ENCODE measurements at regions of chr15 and their contacts with region 1.

Region 1: DNA sequence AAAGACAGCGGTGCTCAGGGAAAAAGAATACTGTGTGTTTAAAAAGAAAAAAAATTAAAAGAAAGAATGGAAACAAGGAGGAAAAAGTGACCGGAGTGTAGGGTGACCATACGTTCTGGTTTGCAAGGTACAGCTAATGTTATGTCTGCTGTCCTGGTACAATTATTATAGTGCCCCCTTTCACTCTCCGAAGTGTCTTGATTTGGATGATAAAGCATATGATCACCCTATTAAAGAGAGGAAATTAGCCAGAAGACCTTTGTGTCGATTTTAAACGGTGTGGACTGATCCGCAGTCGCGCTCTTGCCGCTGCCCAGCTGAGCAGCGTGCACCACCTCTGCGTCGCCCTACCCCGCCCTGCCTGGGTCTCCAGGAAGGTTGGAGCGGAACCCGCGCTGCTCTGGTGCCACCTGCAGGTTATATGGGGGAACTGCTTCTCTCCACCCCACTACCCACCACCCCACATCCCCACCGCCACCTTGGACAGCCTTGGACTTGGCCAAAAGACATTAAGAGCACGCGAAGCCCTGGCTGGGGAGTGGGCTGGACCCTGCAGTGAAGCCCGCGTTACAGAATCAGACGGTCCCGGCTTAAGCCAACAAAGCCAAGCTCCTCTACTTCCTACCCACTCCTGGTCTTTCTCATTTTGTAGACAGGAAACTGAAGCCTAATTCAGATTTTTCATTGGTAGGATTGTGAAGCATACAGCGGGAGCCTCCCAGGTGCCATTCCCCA is 41.2 kb upstream of the UBE2Q2 start:
- DNase-seq: peak; percentile 86
- H3K4me3 Mint-ChIP-seq: peak overlapping the region; percentile 43
- H3K27ac Mint-ChIP-seq: no peak overlapping the region
- H3K4me1 Mint-ChIP-seq: peaks cover 2% of the 10 kb centered on the region
- H3K27me3 Mint-ChIP-seq: peaks cover 19% of the 10 kb centered on the region

Region 2: DNA sequence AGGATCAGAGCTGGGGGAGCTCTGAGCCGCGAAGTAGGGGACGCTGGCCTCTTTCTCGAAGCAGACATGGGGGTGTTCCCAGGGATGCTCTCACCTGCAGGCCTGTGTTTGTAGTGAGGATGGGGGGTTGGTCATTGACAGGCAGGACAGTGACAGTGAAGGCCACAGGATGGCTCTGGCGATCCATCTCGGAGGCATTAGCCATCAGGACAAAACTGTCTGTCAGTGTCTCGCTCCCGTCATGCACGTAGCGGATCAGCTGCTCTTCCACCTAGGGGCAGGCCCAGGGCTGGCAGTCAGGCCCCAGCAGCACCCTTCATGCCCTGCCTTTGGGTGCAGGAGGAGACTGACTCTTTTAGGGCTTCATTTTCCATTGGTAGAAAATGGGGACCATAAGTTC is 117.4 kb before region 1 on chr15:
- CTCF ChIA-PET with region 1: interaction called, 8 read pairs
- intact Hi-C with region 1: loop called (anchors 1 kb)
- DNase-seq: no peak
- H3K4me3 Mint-ChIP-seq: no peak overlapping the region
- H3K27ac Mint-ChIP-seq: no peak overlapping the region
- H3K4me1 Mint-ChIP-seq: no peaks in the 10 kb centered on the region
- H3K27me3 Mint-ChIP-seq: no peaks in the 10 kb centered on the region

Region 3: DNA sequence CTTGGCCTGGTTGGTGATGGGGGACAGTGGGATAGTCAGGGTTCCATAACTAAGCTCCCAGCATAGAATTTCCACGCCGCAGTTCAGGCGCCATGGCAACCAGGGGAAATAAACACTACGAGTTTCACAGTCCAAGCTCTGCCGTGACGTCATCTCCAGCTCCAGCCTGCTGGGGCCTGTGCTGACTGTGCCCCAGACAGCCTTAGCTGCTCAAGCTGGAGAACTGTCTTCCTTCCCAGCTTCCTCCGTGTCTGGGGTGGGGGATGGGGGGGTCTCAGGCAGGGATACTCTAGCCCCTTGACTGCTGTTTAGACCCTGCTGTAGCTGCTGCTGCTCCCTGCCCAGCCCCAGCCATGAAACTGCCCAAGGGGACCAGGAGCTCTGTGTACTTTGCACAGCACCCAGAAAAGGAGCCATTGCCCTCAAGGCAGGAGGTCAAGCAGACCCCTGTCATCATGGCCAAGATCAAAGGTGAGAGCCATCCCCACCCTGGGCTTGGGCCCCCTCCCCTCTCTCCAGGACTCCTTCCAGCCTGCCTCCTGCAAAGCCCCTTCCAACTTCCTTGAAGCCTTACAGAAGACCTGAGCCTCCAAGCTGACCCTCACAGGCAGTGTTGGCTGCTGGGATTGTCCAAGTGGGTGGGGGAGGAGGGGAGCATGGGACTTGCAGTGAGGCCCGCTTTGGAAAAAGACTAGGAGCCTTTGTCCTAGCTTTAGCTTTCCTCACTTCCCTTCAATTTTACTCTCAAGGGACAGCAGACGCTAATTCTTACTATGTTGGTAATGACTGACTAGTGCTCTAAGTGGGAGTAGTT is 78.0 kb before region 1 on chr15:
- CTCF ChIA-PET with region 1: interaction called, 31 read pairs
- intact Hi-C with region 1: loop called (anchors 1 kb)
- DNase-seq: peak; percentile 54
- H3K4me3 Mint-ChIP-seq: no peak overlapping the region
- H3K27ac Mint-ChIP-seq: no peak overlapping the region
- H3K4me1 Mint-ChIP-seq: peaks cover 6% of the 10 kb centered on the region
- H3K27me3 Mint-ChIP-seq: peaks cover 8% of the 10 kb centered on the region

Region 4: GRCh38 chr15:75817138-75817935 is 15.3 kb after region 1 on chr15:
- CTCF ChIA-PET with region 1: interaction called, 10 read pairs
- intact Hi-C with region 1: no loop called
- DNase-seq: peak; percentile 28
- H3K4me3 Mint-ChIP-seq: no peak overlapping the region
- H3K27ac Mint-ChIP-seq: no peak overlapping the region
- H3K4me1 Mint-ChIP-seq: peaks cover 11% of the 10 kb centered on the region
- H3K27me3 Mint-ChIP-seq: no peaks in the 10 kb centered on the region

Region 5: DNA sequence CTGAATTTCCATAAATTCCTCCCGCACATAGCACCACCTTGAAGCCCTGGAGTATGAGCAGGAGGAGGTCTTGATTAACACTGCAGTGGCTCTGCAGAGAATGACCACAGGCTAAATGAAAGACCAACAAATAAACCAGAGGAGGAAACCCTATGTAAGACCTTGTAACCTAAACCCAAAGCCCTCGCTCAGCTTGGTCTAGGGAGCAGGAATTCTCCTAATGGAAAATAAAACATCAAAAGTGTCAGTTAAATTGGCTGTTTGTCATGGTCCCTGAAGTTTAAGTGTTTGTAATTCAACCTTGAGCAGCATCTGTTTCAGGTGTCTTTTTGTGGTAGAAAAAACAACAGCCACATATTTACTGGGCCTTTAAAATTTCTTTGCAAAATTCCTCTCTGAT is 32.0 kb after region 1 on chr15:
- CTCF ChIA-PET with region 1: no interaction called
- intact Hi-C with region 1: no loop called
- DNase-seq: no peak
- H3K4me3 Mint-ChIP-seq: no peak overlapping the region
- H3K27ac Mint-ChIP-seq: no peak overlapping the region
- H3K4me1 Mint-ChIP-seq: no peaks in the 10 kb centered on the region
- H3K27me3 Mint-ChIP-seq: peaks cover under 1% of the 10 kb centered on the region

Region 6: DNA sequence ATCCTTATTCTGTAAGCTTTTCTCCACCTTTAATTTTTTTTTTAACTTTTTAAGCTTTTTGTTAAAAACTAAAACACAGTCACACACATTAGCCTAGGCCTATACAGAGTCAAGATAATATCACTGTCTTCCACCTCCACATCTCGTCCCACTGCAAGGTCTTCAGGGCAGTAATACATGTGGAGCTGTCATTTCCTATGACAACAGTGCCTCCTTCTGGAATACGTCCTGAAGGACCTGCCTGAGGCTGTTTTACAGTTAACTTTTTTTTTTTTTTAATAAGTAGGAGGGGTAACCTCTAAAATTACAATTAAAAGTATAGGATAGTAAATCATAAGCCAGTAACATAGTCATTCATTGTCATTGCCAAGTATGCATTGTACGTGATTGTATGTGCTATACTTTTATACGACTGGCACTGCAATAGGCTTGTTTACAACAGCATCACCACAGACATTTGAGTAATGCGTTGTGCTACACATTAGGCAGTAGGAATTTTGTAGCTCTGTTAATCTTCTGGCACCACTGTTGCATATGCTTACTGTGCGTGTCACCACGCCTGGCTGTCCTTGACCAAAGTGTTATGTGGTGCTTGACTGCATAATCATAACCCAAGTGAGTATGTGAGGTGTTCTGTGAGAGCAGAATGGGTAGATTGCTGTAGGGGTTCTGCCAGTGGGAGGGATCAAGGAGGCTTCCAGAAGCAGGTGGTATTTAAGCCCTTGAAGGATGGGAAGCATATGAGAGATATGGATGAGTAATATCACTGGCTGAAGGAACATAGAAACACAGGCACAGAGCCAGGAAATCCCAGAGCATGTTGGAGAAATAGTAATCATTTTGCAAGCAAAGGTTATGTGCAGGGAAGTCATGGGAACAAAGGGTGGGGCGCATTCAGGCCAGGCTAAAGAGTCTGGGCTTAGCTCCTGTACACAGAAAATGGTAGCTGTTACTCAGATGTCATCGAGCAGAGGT is 120.0 kb after region 1 on chr15:
- CTCF ChIA-PET with region 1: interaction called, 5 read pairs
- intact Hi-C with region 1: loop called (anchors 5 kb)
- DNase-seq: peak; percentile 25
- H3K4me3 Mint-ChIP-seq: no peak overlapping the region
- H3K27ac Mint-ChIP-seq: no peak overlapping the region
- H3K4me1 Mint-ChIP-seq: peaks cover 20% of the 10 kb centered on the region
- H3K27me3 Mint-ChIP-seq: no peaks in the 10 kb centered on the region

Region 7: GRCh38 chr15:77148191-77148590 is 1346.2 kb after region 1 on chr15:
- CTCF ChIA-PET with region 1: no interaction called
- intact Hi-C with region 1: no loop called
- DNase-seq: no peak
- H3K4me3 Mint-ChIP-seq: no peak overlapping the region
- H3K27ac Mint-ChIP-seq: no peak overlapping the region
- H3K4me1 Mint-ChIP-seq: peaks cover 4% of the 10 kb centered on the region
- H3K27me3 Mint-ChIP-seq: no peaks in the 10 kb centered on the region

Measured in activated naive CD4-positive, alpha-beta T cell treated with anti-CD3 and anti-CD28 coated beads for 36 hours (primary cell).